Activated CD8-positive, alpha-beta T cell treated with anti-CD3 and anti-CD28 coated beads for 36 hours (primary cell): ENCODE measurements at regions of chr2 and their contacts with region 1.

Region 1: GRCh38 chr2:149573760-149574159 is 13.8 kb downstream of the MMADHC start:
- DNase-seq: no peak
- ATAC-seq: no peak
- H3K4me3 Mint-ChIP-seq: no peak overlapping the region
- H3K27ac Mint-ChIP-seq: no peak overlapping the region
- H3K4me1 Mint-ChIP-seq: peaks cover 13% of the 10 kb centered on the region
- H3K27me3 Mint-ChIP-seq: no peaks in the 10 kb centered on the region
- CTCF ChIP-seq: peak; percentile 22

Region 2: DNA sequence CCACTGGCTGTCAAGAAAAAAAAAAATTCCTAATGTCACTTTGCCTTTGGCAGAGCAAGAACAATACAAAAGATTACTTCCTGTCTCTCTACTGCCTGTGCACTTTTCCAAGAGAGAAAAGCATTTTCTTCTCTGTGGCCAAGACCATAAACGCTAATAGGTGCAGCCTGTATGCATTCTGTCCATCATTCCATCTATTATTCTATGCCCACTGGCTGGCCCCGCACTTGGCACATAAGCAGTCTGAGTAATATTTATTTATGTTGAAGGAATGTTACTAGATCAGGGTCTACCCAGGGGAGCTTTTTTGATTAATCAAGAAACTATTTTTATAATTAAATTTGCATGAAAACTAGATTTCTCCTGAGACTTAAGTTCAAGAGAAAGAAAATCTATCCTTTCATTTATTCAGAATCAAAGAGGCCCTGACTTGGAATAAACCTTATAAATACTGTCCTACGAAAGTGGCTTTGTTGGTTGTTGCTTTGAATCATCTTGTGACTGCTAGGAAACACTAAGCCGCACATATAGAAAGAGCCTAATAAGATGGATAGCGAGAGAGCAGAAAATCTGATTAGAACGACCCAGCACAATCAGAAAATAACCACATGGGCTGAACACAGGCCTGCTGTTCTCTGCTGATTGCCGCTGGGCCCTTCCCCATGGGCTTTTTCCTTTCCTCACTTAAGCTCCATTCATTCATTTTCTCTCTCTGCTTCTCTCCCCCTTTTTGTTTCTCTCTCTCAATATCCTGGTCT is 45.6 kb before region 1 on chr2:
- CTCF ChIA-PET with region 1: no interaction called
- POLR2A ChIA-PET with region 1: no interaction called
- intact Hi-C with region 1: no loop called
- DNase-seq: no peak
- ATAC-seq: no peak
- H3K4me3 Mint-ChIP-seq: no peak overlapping the region
- H3K27ac Mint-ChIP-seq: no peak overlapping the region
- H3K4me1 Mint-ChIP-seq: no peaks in the 10 kb centered on the region
- H3K27me3 Mint-ChIP-seq: peaks cover 18% of the 10 kb centered on the region
- CTCF ChIP-seq: no peak

Region 3: DNA sequence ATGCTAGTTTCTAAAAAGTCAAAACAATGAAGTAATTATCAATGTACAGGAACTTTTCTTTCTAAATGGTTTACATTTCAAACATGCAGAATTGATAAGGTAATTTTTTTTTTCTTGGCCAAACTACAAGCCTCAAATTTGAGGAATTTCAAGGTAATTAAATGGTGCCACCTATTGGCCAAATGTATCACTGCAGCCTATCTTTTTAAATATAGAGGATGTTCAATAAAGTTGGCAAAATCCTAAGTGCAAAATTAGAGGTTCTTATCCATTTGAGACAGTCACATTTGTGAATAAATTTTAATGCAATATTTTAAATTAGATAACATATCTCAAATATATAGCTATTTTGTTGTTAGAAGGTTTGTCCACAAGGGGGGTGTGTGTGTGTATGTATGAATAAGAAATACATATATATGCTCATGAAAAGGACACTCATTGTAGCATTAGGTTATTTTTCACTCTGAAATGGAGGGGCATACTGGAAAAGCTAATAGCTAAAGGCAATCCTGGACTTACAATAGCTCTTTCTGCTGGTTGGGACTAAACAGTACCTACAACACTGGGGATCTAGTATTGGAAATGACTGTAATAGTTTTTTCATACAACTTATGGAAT is 12.3 kb before region 1 on chr2:
- CTCF ChIA-PET with region 1: interaction called, 14 read pairs
- POLR2A ChIA-PET with region 1: interaction called, 4 read pairs
- intact Hi-C with region 1: no loop called
- DNase-seq: peak; percentile 10
- ATAC-seq: no peak
- H3K4me3 Mint-ChIP-seq: no peak overlapping the region
- H3K27ac Mint-ChIP-seq: no peak overlapping the region
- H3K4me1 Mint-ChIP-seq: no peaks in the 10 kb centered on the region
- H3K27me3 Mint-ChIP-seq: peaks cover 4% of the 10 kb centered on the region
- CTCF ChIP-seq: peak; percentile 96

Region 4: GRCh38 chr2:149587220-149587949 is 13.6 kb after region 1 on chr2 and contains the start of gene MMADHC:
- CTCF ChIA-PET with region 1: interaction called, 17 read pairs
- POLR2A ChIA-PET with region 1: interaction called, 5 read pairs
- intact Hi-C with region 1: no loop called
- DNase-seq: peak; percentile 95
- ATAC-seq: peak; percentile 98
- H3K4me3 Mint-ChIP-seq: peak within 1 kb of the TSS; percentile 95
- H3K27ac Mint-ChIP-seq: peak within 1 kb of the TSS; percentile 98
- H3K4me1 Mint-ChIP-seq: peaks cover 39% of the 10 kb centered on the region
- H3K27me3 Mint-ChIP-seq: peaks cover 12% of the 10 kb centered on the region
- CTCF ChIP-seq: no peak
- total RNA-seq, gene MMADHC: 130 to 132 TPM